ENCODE measurements at regions of chr14 and their contacts with region 1.

Region 1: DNA sequence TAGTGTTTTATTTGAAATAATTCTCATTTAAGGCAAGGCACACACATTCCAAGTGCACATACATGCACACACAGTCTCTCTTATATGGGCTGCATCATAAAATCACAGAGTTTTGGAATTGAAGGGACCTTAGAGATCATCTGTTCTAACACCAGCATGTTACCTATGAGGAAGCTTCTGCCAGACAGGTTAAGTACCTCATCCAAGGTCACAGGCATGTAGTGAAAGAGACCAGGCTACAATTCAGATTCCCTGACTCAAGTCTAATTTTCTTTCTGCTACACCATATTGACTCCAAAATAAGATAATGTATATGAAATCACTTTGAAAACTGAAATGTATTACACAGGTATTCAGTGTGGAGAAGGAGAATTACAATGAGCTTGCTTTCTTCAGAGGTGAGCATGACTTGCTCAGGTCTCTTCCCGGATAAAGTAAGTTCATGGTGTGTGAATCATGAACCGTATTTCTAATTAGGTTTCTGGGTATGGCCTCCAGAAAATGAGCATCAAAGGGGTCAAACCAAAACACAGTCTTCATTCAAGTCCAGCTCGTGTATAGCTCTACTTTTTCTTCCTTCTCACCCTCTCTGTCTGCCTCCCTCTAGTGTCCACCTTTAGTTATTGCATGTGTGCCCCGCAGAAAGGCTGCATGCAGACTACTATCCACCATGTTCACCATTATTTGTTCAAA is 411.9 kb downstream of the FUT8 start:
- DNase-seq: no peak
- ATAC-seq: peak; percentile 77
- H3K4me3 ChIP-seq: no peak overlapping the region
- H3K27ac ChIP-seq: no peak overlapping the region
- H3K4me1 ChIP-seq: no peaks in the 10 kb centered on the region
- H3K27me3 ChIP-seq: no peaks in the 10 kb centered on the region

Region 2: GRCh38 chr14:65164068-65164824 is 660.2 kb before region 1 on chr14:
- intact Hi-C with region 1: loop called (anchors 2 to 5 kb)
- DNase-seq: no peak
- ATAC-seq: no peak
- H3K4me3 ChIP-seq: no peak overlapping the region
- H3K27ac ChIP-seq: no peak overlapping the region
- H3K4me1 ChIP-seq: peaks cover 0 to 1% of the 10 kb centered on the region in 2 donors
- H3K27me3 ChIP-seq: no peaks in the 10 kb centered on the region

Region 3: DNA sequence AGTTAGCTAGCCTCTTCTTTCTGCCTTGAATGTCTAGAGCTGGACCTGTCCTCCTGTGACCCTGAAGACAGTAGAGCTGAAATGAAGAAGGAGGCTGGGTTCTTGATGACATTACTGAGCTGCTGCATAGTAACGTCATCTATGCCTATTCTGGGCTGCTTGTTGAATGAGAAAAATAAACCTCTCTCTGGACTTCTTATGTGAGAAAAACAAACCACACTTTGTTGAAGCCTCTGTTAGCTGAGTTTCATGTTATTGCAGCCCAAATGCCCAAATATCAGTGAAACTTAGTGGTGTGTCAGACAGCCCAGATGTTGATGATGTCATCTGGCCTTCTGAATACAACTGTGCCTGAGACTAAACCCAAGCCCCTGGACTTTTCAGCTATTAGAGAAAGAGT is 655.1 kb before region 1 on chr14:
- intact Hi-C with region 1: loop called (anchors 2 to 5 kb)
- DNase-seq: no peak
- ATAC-seq: no peak
- H3K4me3 ChIP-seq: no peak overlapping the region
- H3K27ac ChIP-seq: no peak overlapping the region
- H3K4me1 ChIP-seq: peaks cover 0 to 1% of the 10 kb centered on the region in 2 donors
- H3K27me3 ChIP-seq: no peaks in the 10 kb centered on the region

Region 4: DNA sequence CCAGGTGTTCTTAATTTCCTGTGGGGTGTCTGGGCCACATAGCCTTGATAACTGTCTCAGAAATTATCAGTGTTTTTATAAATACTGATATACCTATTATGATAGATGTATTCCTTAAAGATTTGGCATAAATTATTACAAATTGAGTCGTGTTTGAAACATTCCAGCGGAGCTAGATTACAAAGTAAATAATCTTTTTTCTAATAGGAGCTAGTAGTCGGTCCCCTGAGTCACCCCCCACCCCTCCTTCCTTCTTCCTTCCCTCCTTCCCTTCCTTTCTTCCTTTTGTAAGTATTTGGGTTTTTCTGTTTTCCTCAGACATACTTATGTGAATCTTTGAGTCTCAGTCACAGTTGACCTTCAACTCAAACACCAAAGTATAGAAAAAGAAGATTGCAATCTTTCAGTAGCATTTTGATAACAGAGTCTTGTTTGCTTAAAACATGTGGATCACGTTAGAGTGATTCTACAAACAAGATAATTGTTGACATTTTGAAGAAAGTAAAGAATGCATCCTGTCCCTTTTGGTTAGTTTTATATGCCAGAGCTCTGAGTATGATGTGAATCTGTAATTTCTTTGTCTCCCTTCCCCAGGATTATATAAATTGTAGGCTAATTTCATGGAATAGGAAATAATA is 148.0 kb before region 1 on chr14:
- intact Hi-C with region 1: no loop called
- DNase-seq: no peak
- ATAC-seq: no peak
- H3K4me3 ChIP-seq: no peak overlapping the region
- H3K27ac ChIP-seq: no peak overlapping the region
- H3K4me1 ChIP-seq: no peaks in the 10 kb centered on the region
- H3K27me3 ChIP-seq: no peaks in the 10 kb centered on the region